Activated T-helper 1 cell treated with anti-CD3 and anti-CD28 coated beads, Interleukin-12 subunit alpha, Interleukin-12 subunit beta, Interleukin-2, Interleukin-4 antibody, amounts not matched to agents 30 ng/mL and 10 ng/mL and 1 ng/mL, durations not matched to agents 14 hours and 24 hours and 36 hours (primary cell): ENCODE measurements at regions of chr12 and their contacts with region 1.

Region 1: GRCh38 chr12:21501379-21501956 is at the starts of genes GOLT1B and RECQL:
- DNase-seq: peak; percentile 90
- H3K4me3 Mint-ChIP-seq: no peak within 1 kb of the TSS
- H3K27ac Mint-ChIP-seq: peak within 1 kb of the TSS; percentile 8
- H3K4me1 Mint-ChIP-seq: peaks cover 49% of the 10 kb centered on the region
- H3K27me3 Mint-ChIP-seq: no peaks in the 10 kb centered on the region
- total RNA-seq, gene GOLT1B: 42.6 and 46.5 TPM in 2 replicates
- total RNA-seq, gene RECQL: 56.4 and 60.6 TPM in 2 replicates

Region 2: DNA sequence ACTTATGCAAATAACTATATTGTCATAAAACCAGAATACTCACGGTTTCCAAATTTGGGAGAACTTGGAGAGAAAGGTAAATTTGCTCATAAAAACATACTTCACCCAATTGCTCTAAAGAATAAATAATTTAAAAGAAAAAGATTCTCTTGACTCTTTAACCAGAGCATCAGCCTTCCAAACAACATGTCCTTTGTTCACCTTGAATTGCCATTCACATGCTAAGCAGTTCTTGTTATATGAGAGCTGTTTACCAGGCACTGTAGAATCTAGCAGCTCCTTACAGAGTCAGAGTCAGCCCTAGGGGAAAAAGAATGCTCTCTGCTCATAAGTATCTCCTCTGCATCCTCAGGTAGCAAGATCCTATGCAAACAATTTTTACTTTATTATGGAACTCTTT is 176.9 kb before region 1 on chr12:
- intact Hi-C with region 1: loop called (anchors 10 kb)
- DNase-seq: no peak
- H3K4me3 Mint-ChIP-seq: no peak overlapping the region
- H3K27ac Mint-ChIP-seq: no peak overlapping the region
- H3K4me1 Mint-ChIP-seq: no peaks in the 10 kb centered on the region
- H3K27me3 Mint-ChIP-seq: no peaks in the 10 kb centered on the region

Region 3: GRCh38 chr12:21451529-21451928 is 49.9 kb before region 1 on chr12:
- intact Hi-C with region 1: loop called (anchors 1 kb)
- DNase-seq: no peak
- H3K4me3 Mint-ChIP-seq: no peak overlapping the region
- H3K27ac Mint-ChIP-seq: no peak overlapping the region
- H3K4me1 Mint-ChIP-seq: peaks cover 50% of the 10 kb centered on the region
- H3K27me3 Mint-ChIP-seq: no peaks in the 10 kb centered on the region

Region 4: GRCh38 chr12:21483531-21483930 is 17.9 kb before region 1 on chr12:
- intact Hi-C with region 1: no loop called
- DNase-seq: no peak
- H3K4me3 Mint-ChIP-seq: no peak overlapping the region
- H3K27ac Mint-ChIP-seq: no peak overlapping the region
- H3K4me1 Mint-ChIP-seq: peaks cover 9% of the 10 kb centered on the region
- H3K27me3 Mint-ChIP-seq: no peaks in the 10 kb centered on the region

Region 5: GRCh38 chr12:21527451-21528180 is 26.1 kb after region 1 on chr12:
- intact Hi-C with region 1: loop called (anchors 1 kb)
- DNase-seq: peak; percentile 51
- H3K4me3 Mint-ChIP-seq: peak overlapping the region; percentile 86
- H3K27ac Mint-ChIP-seq: no peak overlapping the region
- H3K4me1 Mint-ChIP-seq: peaks cover 5% of the 10 kb centered on the region
- H3K27me3 Mint-ChIP-seq: peaks cover 27% of the 10 kb centered on the region

Region 6: DNA sequence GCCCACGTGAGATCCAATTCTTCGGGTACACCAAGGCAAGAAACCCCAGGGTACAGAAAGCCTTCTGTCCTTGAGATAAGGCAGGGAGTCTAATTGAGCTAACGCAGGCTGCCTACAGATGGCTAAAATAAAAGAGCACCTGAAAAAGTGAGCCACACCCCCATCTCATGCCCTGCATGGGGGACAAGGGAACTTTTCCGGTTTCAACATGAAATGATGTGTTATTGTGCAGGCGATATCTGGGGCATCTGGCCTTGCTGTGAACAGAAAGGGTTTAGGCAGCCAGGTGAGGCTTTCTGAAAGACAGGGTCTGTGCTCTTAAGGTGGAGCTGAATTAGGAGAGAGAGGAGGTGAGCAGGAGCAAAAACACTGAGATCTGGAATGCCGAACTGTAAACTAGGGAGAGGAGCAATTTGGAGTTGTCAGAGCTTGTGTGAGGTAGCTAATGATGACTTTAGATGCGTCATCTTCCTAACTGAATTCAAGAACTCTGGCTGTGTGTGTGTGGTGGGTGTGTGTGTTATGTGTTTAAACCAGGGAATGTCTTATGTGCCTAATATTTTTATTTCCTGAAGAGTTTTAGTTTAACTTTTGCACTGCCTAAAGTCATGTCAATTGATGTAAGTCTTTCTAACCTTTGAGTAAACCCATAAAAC is 176.3 kb after region 1 on chr12:
- intact Hi-C with region 1: loop called (anchors 1 kb)
- DNase-seq: no peak
- H3K4me3 Mint-ChIP-seq: no peak overlapping the region
- H3K27ac Mint-ChIP-seq: no peak overlapping the region
- H3K4me1 Mint-ChIP-seq: peaks cover 28% of the 10 kb centered on the region
- H3K27me3 Mint-ChIP-seq: peaks cover 8% of the 10 kb centered on the region

Region 7: DNA sequence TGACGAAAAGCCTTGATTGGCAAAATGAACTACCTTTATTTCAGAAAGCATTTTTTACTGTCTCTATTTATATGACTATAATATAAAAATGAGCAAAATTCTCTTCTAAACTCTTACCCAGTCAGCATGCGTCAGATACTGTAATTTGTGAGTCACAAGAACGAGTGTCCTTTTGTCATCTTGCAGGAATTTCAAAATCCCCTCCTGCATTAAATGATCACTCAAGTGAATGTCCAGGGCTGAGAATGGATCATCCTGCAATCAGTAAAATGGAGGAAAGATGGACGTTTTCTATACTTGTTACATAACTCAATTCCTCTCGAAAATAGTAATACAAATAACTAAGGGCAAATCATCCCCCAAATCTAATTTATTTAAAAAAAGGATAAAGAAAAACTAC is 350.8 kb after region 1 on chr12:
- intact Hi-C with region 1: no loop called
- DNase-seq: no peak
- H3K4me3 Mint-ChIP-seq: no peak overlapping the region
- H3K27ac Mint-ChIP-seq: no peak overlapping the region
- H3K4me1 Mint-ChIP-seq: no peaks in the 10 kb centered on the region
- H3K27me3 Mint-ChIP-seq: peaks cover 4% of the 10 kb centered on the region